H1 (cell line): ENCODE measurements at regions of chr7 and their contacts with region 1.

Region 1: GRCh38 chr7:90455163-90456030 is 14.0 kb upstream of the PTTG1IP2 start:
- DNase-seq: no peak
- H3K4me3 ChIP-seq: peak overlapping the region in 1 of 4 experiments; percentile 42; a peak in 1 of 8 replicates
- H3K27ac ChIP-seq: no peak overlapping the region
- H3K4me1 ChIP-seq: no peaks in the 10 kb centered on the region
- H3K27me3 ChIP-seq: peaks cover 0 to 1% (median 0%) of the 10 kb centered on the region in 4 experiments; a peak in 1 of 7 replicates
- CTCF ChIP-seq: peak in 2 of 3 experiments; percentile 48 to 60; a peak in 2 of 4 replicates
- EP300 ChIP-seq: no peak
- POLR2A ChIP-seq: no peak
- RAD21 ChIP-seq: peak; percentile 73 to 77

Region 2: DNA sequence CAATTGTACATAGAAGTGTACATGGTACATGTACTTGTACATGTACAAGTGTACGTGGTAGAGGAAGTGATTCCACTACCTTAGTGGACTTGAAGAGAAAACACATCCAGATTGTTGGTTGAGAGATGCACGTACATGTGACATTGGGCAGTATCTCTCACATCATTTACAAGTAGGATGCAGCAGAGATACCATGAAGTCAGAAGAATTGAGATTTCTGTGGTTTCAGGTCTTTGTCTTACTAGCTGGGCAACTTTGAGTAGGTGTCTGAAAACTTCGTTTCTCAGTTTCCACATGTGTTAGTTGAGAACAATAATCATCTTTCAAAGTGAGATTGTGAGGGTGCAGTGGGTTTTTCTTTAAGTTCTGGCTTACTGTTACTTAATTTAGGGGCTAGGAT is 30.7 kb before region 1 on chr7:
- CTCF ChIA-PET with region 1: interaction called, 13 read pairs
- POLR2A ChIA-PET with region 1: no interaction called
- DNase-seq: no peak
- H3K4me3 ChIP-seq: no peak overlapping the region
- H3K27ac ChIP-seq: no peak overlapping the region
- H3K4me1 ChIP-seq: no peaks in the 10 kb centered on the region
- H3K27me3 ChIP-seq: no peaks in the 10 kb centered on the region
- CTCF ChIP-seq: no peak
- EP300 ChIP-seq: no peak
- POLR2A ChIP-seq: no peak
- RAD21 ChIP-seq: no peak

Region 3: GRCh38 chr7:90465816-90466215 is 10.4 kb after region 1 on chr7:
- CTCF ChIA-PET with region 1: interaction called, 11 read pairs
- POLR2A ChIA-PET with region 1: no interaction called
- DNase-seq: no peak
- H3K4me3 ChIP-seq: no peak overlapping the region
- H3K27ac ChIP-seq: no peak overlapping the region
- H3K4me1 ChIP-seq: no peaks in the 10 kb centered on the region
- H3K27me3 ChIP-seq: no peaks in the 10 kb centered on the region
- CTCF ChIP-seq: no peak
- EP300 ChIP-seq: no peak
- POLR2A ChIP-seq: no peak
- RAD21 ChIP-seq: no peak

Region 4: DNA sequence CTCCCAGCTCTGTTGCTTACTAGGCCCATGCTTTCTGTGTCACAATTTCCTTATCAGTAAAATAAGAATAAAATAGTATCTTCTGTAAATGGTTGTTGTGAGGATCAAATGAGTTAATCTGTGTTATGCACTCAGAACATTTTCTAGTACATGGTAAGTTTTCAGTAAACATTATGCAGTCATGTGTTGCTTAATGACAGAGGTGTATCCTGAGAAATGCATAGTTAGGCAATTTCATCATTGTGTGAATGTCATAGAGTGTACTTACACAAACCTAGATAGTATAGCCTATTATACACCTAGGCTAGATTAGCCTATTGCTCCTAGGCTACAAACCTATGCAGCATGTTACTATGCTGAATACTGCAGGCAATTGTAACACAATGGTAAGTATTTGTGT is 18.4 kb after region 1 on chr7:
- CTCF ChIA-PET with region 1: interaction called, 10 read pairs
- POLR2A ChIA-PET with region 1: no interaction called
- DNase-seq: no peak
- H3K4me3 ChIP-seq: no peak overlapping the region
- H3K27ac ChIP-seq: no peak overlapping the region
- H3K4me1 ChIP-seq: no peaks in the 10 kb centered on the region
- H3K27me3 ChIP-seq: no peaks in the 10 kb centered on the region
- CTCF ChIP-seq: no peak
- EP300 ChIP-seq: no peak
- POLR2A ChIP-seq: no peak
- RAD21 ChIP-seq: no peak

Region 5: DNA sequence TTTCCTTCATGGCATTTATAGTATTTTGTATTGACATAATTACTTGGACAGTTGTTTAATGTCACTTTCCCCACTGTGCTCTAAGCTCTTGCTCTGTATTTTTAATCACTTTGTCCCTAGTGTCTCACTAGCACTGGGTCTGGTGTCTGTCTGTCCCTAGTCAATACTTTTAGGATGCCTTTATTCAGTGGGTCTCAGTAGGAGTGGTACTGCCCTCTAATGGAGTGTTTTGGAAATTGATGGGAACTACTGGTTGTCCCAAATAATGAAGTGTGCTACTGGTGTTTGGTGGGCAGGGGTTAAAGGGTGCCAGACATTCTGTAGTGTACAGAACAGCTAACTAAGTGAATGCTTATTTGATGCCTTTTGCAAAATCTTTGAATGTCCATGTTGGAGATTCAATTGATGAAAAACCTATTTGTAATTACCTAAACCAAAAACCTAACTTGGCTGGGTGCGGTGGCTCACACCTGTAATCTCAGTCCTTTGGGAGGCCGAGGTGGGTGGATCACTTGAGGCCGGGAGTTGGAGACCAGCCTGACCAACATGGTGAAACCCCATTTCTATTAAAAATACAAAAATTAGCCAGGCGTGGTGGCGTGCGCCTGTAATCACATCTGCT is 174.0 kb after region 1 on chr7:
- CTCF ChIA-PET with region 1: interaction called, 10 read pairs
- POLR2A ChIA-PET with region 1: no interaction called
- DNase-seq: no peak
- H3K4me3 ChIP-seq: no peak overlapping the region
- H3K27ac ChIP-seq: no peak overlapping the region
- H3K4me1 ChIP-seq: peaks cover 0 to 9% (median 4%) of the 10 kb centered on the region in 4 experiments; a peak in 2 of 7 replicates
- H3K27me3 ChIP-seq: no peaks in the 10 kb centered on the region
- CTCF ChIP-seq: peak in 2 of 3 experiments; percentile 69 to 77; a peak in 3 of 4 replicates
- EP300 ChIP-seq: no peak
- POLR2A ChIP-seq: no peak
- RAD21 ChIP-seq: peak; percentile 82 to 88

Region 6: DNA sequence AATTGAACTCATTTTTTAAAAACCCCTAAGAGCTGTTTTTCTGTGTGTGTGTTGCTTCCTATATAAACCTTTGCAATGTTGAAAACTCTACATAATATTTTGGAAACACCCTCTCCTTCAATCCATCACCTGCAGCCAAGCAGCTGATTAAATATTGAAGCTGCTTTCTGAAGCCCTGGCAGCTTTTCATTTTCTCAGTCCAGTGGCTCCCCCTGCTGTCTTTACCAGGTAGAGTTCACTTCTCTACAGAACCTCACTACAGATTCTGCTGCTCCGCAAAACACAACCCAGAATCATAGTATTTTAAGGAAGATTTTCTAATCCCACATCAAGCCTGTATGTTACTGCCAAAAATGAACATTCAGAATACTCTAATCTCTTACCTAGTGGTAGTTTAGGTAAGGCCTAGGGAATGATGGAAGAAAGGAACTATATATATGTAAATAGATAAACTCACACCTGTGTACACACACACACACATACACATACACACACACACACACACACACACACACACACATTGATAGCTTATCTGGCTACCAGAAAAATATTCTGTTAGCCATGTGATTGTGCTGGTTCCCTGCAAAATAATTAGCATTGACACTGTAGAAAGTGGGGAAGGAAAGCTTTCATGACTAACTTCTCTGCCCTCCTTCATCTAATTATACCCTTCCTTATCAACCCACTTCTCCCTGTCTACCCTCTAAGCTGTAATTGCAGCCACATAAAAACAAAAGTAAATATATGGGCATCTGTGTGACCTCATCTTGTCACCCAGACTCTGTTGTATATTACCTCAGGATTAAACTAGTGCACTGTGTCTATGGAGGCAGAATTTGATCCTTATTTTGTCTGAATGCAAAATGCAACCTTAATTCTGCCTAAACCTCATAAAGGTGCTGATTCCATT is 579.3 kb after region 1 on chr7:
- CTCF ChIA-PET with region 1: interaction called, 11 read pairs
- POLR2A ChIA-PET with region 1: no interaction called
- DNase-seq: peak in 1 of 2 experiments; percentile 74
- H3K4me3 ChIP-seq: no peak overlapping the region
- H3K27ac ChIP-seq: no peak overlapping the region
- H3K4me1 ChIP-seq: peaks cover 8 to 18% (median 14%) of the 10 kb centered on the region in 4 experiments; a peak in 5 of 7 replicates
- H3K27me3 ChIP-seq: no peaks in the 10 kb centered on the region
- CTCF ChIP-seq: peak in 2 of 3 experiments; percentile 63 to 78; a peak in 3 of 4 replicates
- EP300 ChIP-seq: no peak
- POLR2A ChIP-seq: no peak
- RAD21 ChIP-seq: peak; percentile 92 to 95